Gastrocnemius medialis (tissue), 4 donors: ENCODE measurements at regions of chr14 and their contacts with region 1.

Region 1: GRCh38 chr14:50003213-50004031 is 110.5 kb downstream of the ARF6 start:
- DNase-seq: peak; percentile 65 to 76
- ATAC-seq: peak in 1 of 2 donors; percentile 5
- H3K4me3 ChIP-seq: peak overlapping the region; percentile 56 to 72 (median 64)
- H3K27ac ChIP-seq: peak overlapping the region; percentile 93 to 97 (median 94)
- H3K4me1 ChIP-seq: peaks cover 43 to 49% of the 10 kb centered on the region in 2 donors
- H3K27me3 ChIP-seq: no peaks in the 10 kb centered on the region
- CTCF ChIP-seq: peak in 4 of 5 experiments; percentile 16 to 29 (median 20)
- POLR2A ChIP-seq: peak in 1 of 2 donors; percentile 64

Region 2: GRCh38 chr14:49862089-49862673 is 141.2 kb before region 1 on chr14:
- in situ Hi-C with region 1: loop called in 1 of 4 experiments (anchors 10 kb)
- intact Hi-C with region 1: loop called (anchors 2 kb)
- DNase-seq: peak; percentile 69 to 82
- ATAC-seq: peak; percentile 50 to 51
- H3K4me3 ChIP-seq: peak overlapping the region; percentile 61 to 89 (median 76)
- H3K27ac ChIP-seq: peak overlapping the region; percentile 91 to 99 (median 98)
- H3K4me1 ChIP-seq: peaks cover 21 to 26% of the 10 kb centered on the region in 2 donors
- H3K27me3 ChIP-seq: no peaks in the 10 kb centered on the region
- CTCF ChIP-seq: peak; percentile 97 to 100 (median 100)
- POLR2A ChIP-seq: no peak

Region 3: DNA sequence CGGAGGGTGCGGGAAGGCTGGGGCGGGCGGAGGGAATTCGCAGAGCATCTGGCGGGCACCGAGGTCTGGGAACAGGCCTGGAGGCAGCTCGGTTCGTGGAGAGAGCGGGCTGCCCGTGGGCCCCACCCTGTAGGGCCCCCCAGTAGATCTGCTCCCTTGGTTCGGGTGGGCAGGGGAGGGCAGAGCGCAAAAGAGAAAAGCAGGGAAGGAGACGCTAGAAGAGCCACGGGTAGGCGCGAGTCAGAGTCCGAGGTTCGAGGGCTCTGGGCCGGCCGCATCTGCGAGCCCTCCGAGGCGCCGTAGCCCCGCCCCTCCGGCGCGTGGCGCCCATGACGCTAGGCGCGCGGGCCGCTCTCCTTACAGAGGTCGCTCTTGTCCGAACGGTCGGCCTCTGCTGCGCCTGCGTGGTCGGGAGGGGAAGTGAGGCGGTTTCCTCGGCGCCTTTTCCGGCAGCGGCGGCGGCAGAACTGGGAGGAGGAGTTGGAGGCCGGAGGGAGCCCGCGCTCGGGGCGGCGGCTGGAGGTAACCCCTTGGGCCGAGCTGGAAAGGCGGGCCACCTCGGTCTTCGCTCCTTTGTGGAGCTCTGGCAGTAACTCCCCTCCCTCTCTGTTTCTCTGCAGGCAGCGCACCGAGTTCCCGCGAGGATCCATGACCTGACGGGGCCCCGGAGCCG is 110.7 kb before region 1 on chr14 and contains the start of gene ARF6:
- in situ Hi-C with region 1: loop called in 2 of 4 experiments (anchors 5 to 10 kb)
- intact Hi-C with region 1: loop called (anchors 1 kb)
- DNase-seq: peak; percentile 98 to 99
- ATAC-seq: peak; percentile 89 to 90
- H3K4me3 ChIP-seq: peak within 1 kb of the TSS; percentile 66 to 93 (median 89)
- H3K27ac ChIP-seq: peak within 1 kb of the TSS; percentile 96 to 100 (median 98)
- H3K4me1 ChIP-seq: peaks cover 39 to 46% of the 10 kb centered on the region in 2 donors
- H3K27me3 ChIP-seq: no peaks in the 10 kb centered on the region
- CTCF ChIP-seq: peak in 3 of 5 experiments; percentile 11 to 22 (median 20)
- POLR2A ChIP-seq: peak; percentile 98 to 99
- total RNA-seq, gene ARF6: 20.7 to 40.0 (median 30.8) TPM

Region 4: DNA sequence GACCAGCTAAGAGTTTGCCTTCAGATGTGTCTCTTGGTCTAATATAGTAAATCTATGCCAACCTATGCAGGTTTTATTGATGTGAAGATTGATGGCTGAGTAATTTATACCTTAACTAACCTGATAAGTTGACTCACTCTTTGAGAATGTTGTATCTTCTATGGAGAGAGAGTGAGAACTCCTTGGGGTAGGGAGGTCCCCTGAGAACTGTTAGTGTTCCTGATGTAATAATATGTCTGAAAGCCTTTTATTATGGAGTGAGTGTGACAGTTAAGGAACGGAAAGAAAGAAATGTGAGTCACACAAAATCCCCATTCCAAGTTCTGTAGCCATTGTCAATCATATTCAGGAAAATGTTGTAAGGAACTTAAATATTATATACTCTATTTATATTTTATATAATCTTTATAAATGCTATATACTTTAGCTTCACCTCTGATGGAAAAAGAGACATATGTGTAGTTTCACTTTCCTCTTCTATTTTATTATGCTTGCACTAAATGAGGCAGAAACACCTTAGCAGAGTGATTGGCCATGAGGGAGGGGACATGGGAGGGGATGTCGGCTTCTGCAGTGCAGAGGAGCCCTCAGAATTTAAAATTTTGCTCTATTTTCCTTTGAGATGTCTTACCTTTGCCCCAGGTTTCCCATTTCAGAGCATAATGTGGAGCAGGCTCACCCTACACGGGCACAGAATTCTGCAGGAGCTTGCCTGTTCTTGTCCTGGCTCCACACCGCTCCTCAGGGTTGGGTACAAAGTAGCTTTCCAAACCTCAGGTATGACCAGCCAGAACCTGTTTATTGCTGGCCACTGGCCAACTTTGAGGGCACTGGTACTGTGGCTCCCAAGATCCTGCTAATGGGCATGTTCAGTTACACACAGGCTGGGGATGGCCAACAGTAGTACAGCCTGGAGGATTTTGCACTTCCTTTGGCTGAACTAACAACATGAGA is 52.9 kb before region 1 on chr14:
- in situ Hi-C with region 1: no loop called
- intact Hi-C with region 1: loop called (anchors 2 kb)
- DNase-seq: no peak
- ATAC-seq: no peak
- H3K4me3 ChIP-seq: no peak overlapping the region
- H3K27ac ChIP-seq: no peak overlapping the region
- H3K4me1 ChIP-seq: peaks cover 0 to 20% of the 10 kb centered on the region in 2 donors
- H3K27me3 ChIP-seq: no peaks in the 10 kb centered on the region
- CTCF ChIP-seq: no peak
- POLR2A ChIP-seq: no peak

Region 5: GRCh38 chr14:49962621-49963020 is 40.8 kb before region 1 on chr14:
- in situ Hi-C with region 1: no loop called
- intact Hi-C with region 1: no loop called
- DNase-seq: no peak
- ATAC-seq: no peak
- H3K4me3 ChIP-seq: no peak overlapping the region
- H3K27ac ChIP-seq: no peak overlapping the region
- H3K4me1 ChIP-seq: no peaks in the 10 kb centered on the region
- H3K27me3 ChIP-seq: no peaks in the 10 kb centered on the region
- CTCF ChIP-seq: no peak
- POLR2A ChIP-seq: no peak

Region 6: DNA sequence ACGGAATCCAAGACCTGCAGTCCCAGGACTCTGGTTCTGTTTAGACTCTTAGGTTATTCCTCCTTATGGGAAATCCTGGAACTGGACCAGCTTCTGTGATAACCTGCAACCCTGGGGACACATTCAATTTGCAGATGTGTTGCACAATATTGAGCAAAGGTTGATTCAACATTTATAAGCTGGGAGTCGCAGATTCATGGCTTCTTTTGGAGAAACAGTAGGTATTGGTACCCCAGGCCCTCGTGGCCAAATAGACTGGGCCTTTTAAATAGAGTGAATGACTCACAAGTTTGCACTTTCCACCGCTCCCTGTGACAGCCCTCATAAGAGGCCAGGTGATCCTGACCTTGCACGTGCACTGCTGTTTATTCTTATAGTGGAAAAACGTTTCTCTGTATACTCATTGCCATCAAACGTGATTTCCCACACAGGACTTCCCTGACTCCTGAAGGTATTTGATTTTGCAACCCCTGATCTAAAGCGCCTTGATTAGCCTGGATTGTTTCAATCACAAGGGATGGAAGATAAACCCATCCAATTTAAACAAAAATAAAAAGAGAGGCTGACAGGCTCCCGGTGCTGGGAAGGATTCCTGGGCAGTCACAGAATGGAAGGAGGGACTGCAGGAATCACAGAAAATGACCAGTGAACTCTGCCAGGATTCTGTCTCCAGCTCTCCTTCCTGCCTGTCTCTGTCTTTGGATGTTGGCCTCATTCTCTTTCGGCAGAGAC is 14.9 kb after region 1 on chr14:
- in situ Hi-C with region 1: no loop called
- intact Hi-C with region 1: loop called (anchors 1 kb)
- DNase-seq: peak; percentile 66 to 72
- ATAC-seq: peak; percentile 91 to 92
- H3K4me3 ChIP-seq: no peak overlapping the region
- H3K27ac ChIP-seq: peak overlapping the region; percentile 41 to 82 (median 75)
- H3K4me1 ChIP-seq: peaks cover 17 to 43% of the 10 kb centered on the region in 2 donors
- H3K27me3 ChIP-seq: no peaks in the 10 kb centered on the region
- CTCF ChIP-seq: no peak
- POLR2A ChIP-seq: no peak

Region 7: DNA sequence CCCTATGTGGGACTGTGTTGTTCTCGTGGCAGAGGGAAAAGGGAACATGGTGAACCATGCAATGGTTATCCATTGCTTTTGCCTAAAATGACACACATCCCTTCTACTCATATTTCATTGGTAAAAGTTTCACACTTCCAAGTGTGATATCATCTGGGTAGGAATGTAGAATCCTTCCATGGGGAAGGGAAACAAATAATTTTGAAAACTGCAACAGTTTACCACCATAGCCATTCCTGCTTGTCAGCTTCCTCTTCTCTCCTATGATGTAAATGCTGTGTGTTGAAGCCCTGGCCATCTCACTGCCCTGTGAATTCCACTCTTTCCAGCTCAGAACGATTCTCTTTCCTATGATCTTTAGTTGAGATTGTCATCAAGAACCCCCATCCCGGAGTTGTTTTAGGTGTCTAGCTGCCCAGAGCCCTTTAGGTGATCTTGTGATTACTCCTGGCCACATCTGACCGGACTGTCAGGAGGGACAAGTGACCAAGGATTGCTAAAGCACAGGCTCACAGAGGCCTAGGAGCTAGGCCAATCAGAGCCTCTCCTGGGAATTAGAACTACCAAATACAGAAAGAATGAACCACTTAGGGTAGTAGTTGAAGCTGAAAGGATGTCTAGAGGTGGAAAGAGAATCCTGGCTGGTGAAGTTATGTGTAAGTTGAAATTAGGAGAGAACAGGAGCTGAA is 28.3 kb after region 1 on chr14:
- in situ Hi-C with region 1: no loop called
- intact Hi-C with region 1: loop called (anchors 5 kb)
- DNase-seq: peak; percentile 22 to 46
- ATAC-seq: peak; percentile 72 to 78
- H3K4me3 ChIP-seq: no peak overlapping the region
- H3K27ac ChIP-seq: peak overlapping the region; percentile 8 to 58 (median 48)
- H3K4me1 ChIP-seq: no peaks in the 10 kb centered on the region
- H3K27me3 ChIP-seq: no peaks in the 10 kb centered on the region
- CTCF ChIP-seq: no peak
- POLR2A ChIP-seq: no peak

Region 8: GRCh38 chr14:50109342-50109741 is 105.9 kb after region 1 on chr14:
- in situ Hi-C with region 1: no loop called
- intact Hi-C with region 1: loop called (anchors 5 kb)
- DNase-seq: no peak
- ATAC-seq: no peak
- H3K4me3 ChIP-seq: no peak overlapping the region
- H3K27ac ChIP-seq: no peak overlapping the region
- H3K4me1 ChIP-seq: peaks cover 0 to 6% of the 10 kb centered on the region in 2 donors
- H3K27me3 ChIP-seq: no peaks in the 10 kb centered on the region
- CTCF ChIP-seq: no peak
- POLR2A ChIP-seq: no peak